Activated B cell treated with CpG ODN at 0.5 μM for 24 hours (primary cell): ENCODE measurements at regions of chr1 and their contacts with region 1.

Region 1: GRCh38 chr1:154404984-154405761 is at the start of gene IL6R:
- DNase-seq: peak; percentile 68
- ATAC-seq: peak; percentile 60
- H3K4me3 Mint-ChIP-seq: peak within 1 kb of the TSS; percentile 81
- H3K27ac Mint-ChIP-seq: peak within 1 kb of the TSS; percentile 86
- H3K4me1 Mint-ChIP-seq: peaks cover 55% of the 10 kb centered on the region
- H3K27me3 Mint-ChIP-seq: no peaks in the 10 kb centered on the region
- CTCF ChIP-seq: no peak
- total RNA-seq, gene IL6R: 3.3 and 5.1 TPM in 2 replicates

Region 2: GRCh38 chr1:154324669-154325582 is 80.2 kb before region 1 on chr1 and contains the start of gene ATP8B2:
- CTCF ChIA-PET with region 1: interaction called, 3 read pairs
- POLR2A ChIA-PET with region 1: interaction called, 3 read pairs
- intact Hi-C with region 1: loop called (anchors 5 kb)
- DNase-seq: peak; percentile 74
- ATAC-seq: peak; percentile 67
- H3K4me3 Mint-ChIP-seq: peak within 1 kb of the TSS; percentile 95
- H3K27ac Mint-ChIP-seq: peak within 1 kb of the TSS; percentile 88
- H3K4me1 Mint-ChIP-seq: peaks cover 41% of the 10 kb centered on the region
- H3K27me3 Mint-ChIP-seq: peaks cover 17% of the 10 kb centered on the region
- CTCF ChIP-seq: peak; percentile 71
- total RNA-seq, gene ATP8B2: 24.3 and 27.3 TPM in 2 replicates

Region 3: DNA sequence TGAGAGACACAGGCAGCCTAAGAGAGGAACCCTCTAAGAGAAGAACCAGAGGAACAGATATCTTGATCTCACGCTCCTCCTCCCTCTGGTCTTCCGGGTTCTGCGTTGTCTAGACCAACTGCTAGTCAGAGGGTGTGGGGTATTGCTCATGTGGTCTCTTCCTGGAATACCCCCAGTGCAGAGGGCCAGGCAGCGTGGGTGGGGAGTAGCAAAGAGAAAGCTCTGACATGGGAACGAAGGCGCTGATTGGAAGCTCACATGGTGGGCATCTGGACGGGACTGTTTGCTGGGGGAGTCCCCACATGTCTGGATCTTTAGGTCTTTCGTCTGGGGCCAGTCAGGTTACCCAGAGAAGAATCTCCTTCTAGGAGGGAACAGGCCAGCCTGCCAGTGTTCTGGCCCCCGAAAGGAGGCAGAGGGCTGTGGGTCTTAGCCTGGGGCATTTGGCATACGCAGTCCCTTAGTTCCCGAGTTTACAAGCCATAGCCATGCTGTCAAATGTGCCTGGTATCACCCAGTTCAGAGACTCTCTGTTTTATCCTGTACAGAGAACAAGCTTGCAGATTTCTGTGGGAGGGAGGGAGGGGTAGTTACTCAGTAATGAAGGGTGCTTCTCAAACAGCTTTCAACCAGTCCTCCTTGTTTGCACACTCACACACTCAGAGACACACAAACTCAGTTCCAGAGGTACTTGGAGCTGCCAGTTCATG is 18.4 kb before region 1 on chr1:
- CTCF ChIA-PET with region 1: no interaction called
- POLR2A ChIA-PET with region 1: interaction called, 6 read pairs
- intact Hi-C with region 1: loop called (anchors 2 kb)
- DNase-seq: peak; percentile 21
- ATAC-seq: peak; percentile 88
- H3K4me3 Mint-ChIP-seq: peak overlapping the region; percentile 79
- H3K27ac Mint-ChIP-seq: peak overlapping the region; percentile 86
- H3K4me1 Mint-ChIP-seq: peaks cover 23% of the 10 kb centered on the region
- H3K27me3 Mint-ChIP-seq: no peaks in the 10 kb centered on the region
- CTCF ChIP-seq: no peak

Region 4: GRCh38 chr1:154442006-154442740 is 37.0 kb after region 1 on chr1:
- CTCF ChIA-PET with region 1: interaction called, 3 read pairs
- POLR2A ChIA-PET with region 1: no interaction called
- intact Hi-C with region 1: loop called (anchors 1 kb)
- DNase-seq: no peak
- ATAC-seq: no peak
- H3K4me3 Mint-ChIP-seq: no peak overlapping the region
- H3K27ac Mint-ChIP-seq: no peak overlapping the region
- H3K4me1 Mint-ChIP-seq: peaks cover 16% of the 10 kb centered on the region
- H3K27me3 Mint-ChIP-seq: no peaks in the 10 kb centered on the region
- CTCF ChIP-seq: no peak

Region 5: GRCh38 chr1:154546264-154547063 is 141.3 kb after region 1 on chr1:
- CTCF ChIA-PET with region 1: no interaction called
- POLR2A ChIA-PET with region 1: no interaction called
- intact Hi-C with region 1: loop called (anchors 2 kb)
- DNase-seq: peak; percentile 27
- ATAC-seq: peak; percentile 97
- H3K4me3 Mint-ChIP-seq: no peak overlapping the region
- H3K27ac Mint-ChIP-seq: no peak overlapping the region
- H3K4me1 Mint-ChIP-seq: peaks cover 5% of the 10 kb centered on the region
- H3K27me3 Mint-ChIP-seq: no peaks in the 10 kb centered on the region
- CTCF ChIP-seq: no peak

Region 6: DNA sequence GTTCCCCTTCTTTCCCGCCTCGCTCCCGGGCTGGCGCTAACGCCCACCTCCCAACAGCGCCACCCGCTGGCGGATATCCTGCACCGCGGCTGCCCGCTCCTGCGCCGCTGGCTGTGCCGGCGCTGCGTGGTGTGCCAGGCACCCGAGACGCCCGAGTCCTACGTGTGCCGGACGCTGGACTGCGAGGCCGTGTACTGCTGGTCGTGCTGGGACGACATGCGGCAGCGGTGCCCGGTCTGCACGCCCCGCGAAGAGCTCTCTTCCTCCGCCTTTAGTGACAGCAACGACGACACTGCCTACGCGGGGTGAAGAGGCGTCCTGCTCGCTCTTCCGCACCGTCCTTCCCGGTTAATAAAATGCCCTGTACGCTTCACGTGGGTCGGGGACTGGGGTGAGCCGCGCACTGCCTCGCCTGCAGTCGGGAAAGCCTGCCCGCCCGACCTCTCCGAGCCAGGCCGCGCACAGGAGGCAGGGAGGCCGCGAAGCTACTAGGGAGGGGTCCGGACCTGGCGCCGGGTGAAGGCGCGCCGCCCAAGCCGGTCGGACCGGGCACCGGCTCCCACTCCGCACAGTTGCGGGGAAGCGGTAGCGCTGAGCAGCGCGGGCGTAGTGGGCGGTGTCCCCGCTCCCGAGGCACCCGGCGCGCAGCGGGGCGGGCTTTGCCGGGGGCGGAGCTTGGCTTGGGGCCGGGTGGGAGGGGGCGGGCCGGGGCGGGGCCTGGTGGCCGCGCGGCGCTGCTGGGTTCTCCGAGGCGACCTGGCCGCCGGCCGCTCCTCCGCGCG is 645.6 kb after region 1 on chr1 and contains the start of gene ADAM15:
- CTCF ChIA-PET with region 1: no interaction called
- POLR2A ChIA-PET with region 1: no interaction called
- intact Hi-C with region 1: no loop called
- DNase-seq: peak; percentile 78
- ATAC-seq: peak; percentile 83
- H3K4me3 Mint-ChIP-seq: peak within 1 kb of the TSS; percentile 86
- H3K27ac Mint-ChIP-seq: no peak within 1 kb of the TSS
- H3K4me1 Mint-ChIP-seq: peaks cover 22% of the 10 kb centered on the region
- H3K27me3 Mint-ChIP-seq: no peaks in the 10 kb centered on the region
- CTCF ChIP-seq: peak; percentile 56
- total RNA-seq, gene ADAM15: 11.3 and 13.7 TPM in 2 replicates